Mammary epithelial cell (primary cell): ENCODE measurements at regions of chr5 and their contacts with region 1.

Region 1: GRCh38 chr5:108642167-108642906 is 105.4 kb upstream of the FER start:
- DNase-seq: peak; percentile 54
- H3K4me3 ChIP-seq: peak overlapping the region in 1 of 3 experiments; percentile 8
- H3K27ac ChIP-seq: no peak overlapping the region
- H3K4me1 ChIP-seq: peaks cover 5% of the 10 kb centered on the region
- H3K27me3 ChIP-seq: no peaks in the 10 kb centered on the region
- CTCF ChIP-seq: peak; percentile 94 to 96

Region 2: DNA sequence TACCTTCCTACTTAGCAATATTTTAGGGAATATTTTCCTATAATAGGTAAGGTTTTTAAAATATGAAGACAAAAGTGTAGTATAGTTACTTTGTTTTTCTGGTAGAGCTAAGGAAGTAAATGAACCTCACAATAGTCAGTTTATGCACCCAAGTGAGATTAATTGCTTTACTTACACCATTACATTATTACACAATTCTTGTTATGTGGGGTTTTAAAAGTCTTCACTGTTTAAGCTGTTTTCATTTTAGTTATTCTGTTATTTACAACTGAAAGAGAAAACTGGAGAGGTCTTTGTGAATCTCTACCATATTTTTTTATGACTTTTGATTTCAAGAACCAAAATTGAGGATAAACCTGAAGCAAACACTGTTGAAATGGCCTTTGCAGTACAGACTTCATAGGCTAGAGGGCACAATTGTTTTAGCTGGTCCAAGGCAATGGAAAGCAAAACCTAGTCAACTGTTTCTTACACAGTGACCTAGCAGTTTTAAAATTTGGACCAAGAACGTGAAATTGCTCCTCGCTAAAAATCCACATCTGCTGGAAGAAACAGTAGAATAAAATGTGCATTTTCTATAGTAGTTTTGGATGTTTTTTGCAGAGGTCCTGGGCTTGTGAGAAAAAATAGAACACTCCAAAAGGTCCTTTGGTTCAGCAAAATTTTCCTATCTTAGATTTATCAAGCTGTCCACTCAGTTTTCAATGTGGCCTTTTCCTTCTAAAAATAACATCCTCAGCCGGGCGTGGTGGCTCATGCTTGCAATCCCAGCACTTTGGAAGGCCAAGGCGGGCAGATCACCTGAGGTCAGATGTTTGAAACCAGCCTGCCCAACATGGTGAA is 39.0 kb after region 1 on chr5:
- CTCF ChIA-PET with region 1: no interaction called
- dilution Hi-C with region 1: no loop called
- in situ Hi-C with region 1: no loop called
- intact Hi-C with region 1: loop called (anchors 1 kb)
- DNase-seq: peak; percentile 56
- H3K4me3 ChIP-seq: no peak overlapping the region
- H3K27ac ChIP-seq: no peak overlapping the region
- H3K4me1 ChIP-seq: no peaks in the 10 kb centered on the region
- H3K27me3 ChIP-seq: no peaks in the 10 kb centered on the region
- CTCF ChIP-seq: peak; percentile 72 to 87

Region 3: GRCh38 chr5:108700930-108701329 is 58.6 kb after region 1 on chr5:
- CTCF ChIA-PET with region 1: no interaction called
- dilution Hi-C with region 1: no loop called
- in situ Hi-C with region 1: no loop called
- intact Hi-C with region 1: no loop called
- DNase-seq: no peak
- H3K4me3 ChIP-seq: no peak overlapping the region
- H3K27ac ChIP-seq: no peak overlapping the region
- H3K4me1 ChIP-seq: no peaks in the 10 kb centered on the region
- H3K27me3 ChIP-seq: no peaks in the 10 kb centered on the region
- CTCF ChIP-seq: no peak

Region 4: GRCh38 chr5:108919591-108920326 is 277.4 kb after region 1 on chr5:
- CTCF ChIA-PET with region 1: no interaction called
- dilution Hi-C with region 1: no loop called
- in situ Hi-C with region 1: no loop called
- intact Hi-C with region 1: loop called (anchors 1 kb)
- DNase-seq: no peak
- H3K4me3 ChIP-seq: no peak overlapping the region
- H3K27ac ChIP-seq: no peak overlapping the region
- H3K4me1 ChIP-seq: peaks cover 12% of the 10 kb centered on the region
- H3K27me3 ChIP-seq: no peaks in the 10 kb centered on the region
- CTCF ChIP-seq: peak in 1 of 2 donors; percentile 37

Region 5: GRCh38 chr5:109439590-109439989 is 797.3 kb after region 1 on chr5:
- CTCF ChIA-PET with region 1: no interaction called
- dilution Hi-C with region 1: no loop called
- in situ Hi-C with region 1: no loop called
- intact Hi-C with region 1: loop called (anchors 10 kb)
- DNase-seq: no peak
- H3K4me3 ChIP-seq: no peak overlapping the region
- H3K27ac ChIP-seq: no peak overlapping the region
- H3K4me1 ChIP-seq: no peaks in the 10 kb centered on the region
- H3K27me3 ChIP-seq: no peaks in the 10 kb centered on the region
- CTCF ChIP-seq: no peak

Region 6: DNA sequence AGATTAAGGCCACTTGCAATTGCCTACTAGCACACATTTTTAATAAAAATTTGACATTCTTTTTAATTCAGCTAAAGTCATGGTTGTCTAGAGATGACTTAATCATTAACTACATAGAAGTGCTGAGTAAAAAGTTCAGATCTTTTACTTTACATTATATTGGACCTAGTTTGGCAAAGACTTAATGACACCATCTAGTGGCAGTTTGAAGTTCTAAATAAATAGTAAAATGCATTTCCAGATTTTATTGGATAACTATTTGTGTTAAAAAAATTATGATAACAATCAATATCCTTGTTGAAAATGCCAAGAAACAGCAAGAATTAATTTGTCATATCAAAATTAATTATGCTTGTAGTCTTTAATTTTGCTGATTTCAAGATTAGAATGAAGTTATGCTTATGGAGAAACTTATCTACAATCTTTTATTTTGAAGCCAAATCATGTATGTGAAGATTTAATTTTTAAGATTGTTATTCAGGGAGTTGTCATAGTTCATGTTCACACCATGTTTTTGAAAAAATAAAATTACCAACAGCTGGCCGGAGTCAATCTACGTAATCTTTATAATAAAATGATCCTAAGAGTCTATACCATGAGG is 837.0 kb after region 1 on chr5:
- CTCF ChIA-PET with region 1: no interaction called
- dilution Hi-C with region 1: no loop called
- in situ Hi-C with region 1: loop called in 1 of 2 experiments (anchors 25 kb)
- intact Hi-C with region 1: loop called (anchors 1 kb)
- DNase-seq: no peak
- H3K4me3 ChIP-seq: no peak overlapping the region
- H3K27ac ChIP-seq: no peak overlapping the region
- H3K4me1 ChIP-seq: no peaks in the 10 kb centered on the region
- H3K27me3 ChIP-seq: no peaks in the 10 kb centered on the region
- CTCF ChIP-seq: peak; percentile 57 to 59